ENCODE measurements at regions of chr6 and their contacts with region 1.

Region 1: DNA sequence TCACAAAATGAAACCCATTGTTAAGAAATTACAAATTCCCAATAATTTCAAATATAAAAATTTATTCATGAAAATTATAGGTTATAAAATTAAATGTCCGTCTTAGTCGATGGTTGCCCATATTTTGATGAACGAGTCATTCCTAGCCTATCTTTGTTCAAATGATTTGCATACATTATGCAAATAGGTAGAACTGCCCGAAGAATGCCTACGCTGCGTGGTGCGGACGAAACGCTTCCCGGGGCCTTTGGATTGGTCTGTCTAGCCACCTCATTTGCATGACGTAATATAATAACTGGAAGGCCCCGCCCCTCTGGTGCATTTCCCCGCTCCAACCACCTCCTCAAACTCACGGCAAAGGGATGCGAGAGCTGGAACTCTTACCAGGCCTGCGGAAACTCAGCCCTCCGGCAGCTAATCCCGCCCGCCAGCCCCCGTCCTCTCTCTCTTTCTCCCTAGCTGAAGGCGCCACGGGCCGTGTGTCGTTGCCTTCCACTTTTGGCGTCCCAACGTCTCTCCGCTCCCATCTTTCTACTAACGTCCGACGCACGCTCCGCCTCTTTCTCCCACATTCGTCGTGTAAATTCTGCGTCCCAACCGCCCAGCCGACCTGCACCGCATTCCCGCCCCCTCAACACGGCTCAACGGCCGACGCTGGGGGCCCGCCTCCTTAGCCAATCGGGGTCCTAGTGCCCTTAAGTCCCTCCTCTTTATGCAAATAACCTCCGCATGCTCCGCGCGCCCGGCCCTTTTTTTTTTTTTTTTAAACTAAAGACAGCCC is 520 bp upstream of the PRRC2A start:
- DNase-seq: peak; percentile 98
- ATAC-seq: peak; percentile 87
- H3K4me3 ChIP-seq: peak overlapping the region; percentile 64
- H3K27ac ChIP-seq: peak overlapping the region; percentile 92
- H3K4me1 ChIP-seq: no peaks in the 10 kb centered on the region
- H3K27me3 ChIP-seq: no peaks in the 10 kb centered on the region
- CTCF ChIP-seq: no peak
- POLR2A ChIP-seq: peak; percentile 84; the same call in 1 of the 2 replicates
- RAD21 ChIP-seq: no peak

Region 2: DNA sequence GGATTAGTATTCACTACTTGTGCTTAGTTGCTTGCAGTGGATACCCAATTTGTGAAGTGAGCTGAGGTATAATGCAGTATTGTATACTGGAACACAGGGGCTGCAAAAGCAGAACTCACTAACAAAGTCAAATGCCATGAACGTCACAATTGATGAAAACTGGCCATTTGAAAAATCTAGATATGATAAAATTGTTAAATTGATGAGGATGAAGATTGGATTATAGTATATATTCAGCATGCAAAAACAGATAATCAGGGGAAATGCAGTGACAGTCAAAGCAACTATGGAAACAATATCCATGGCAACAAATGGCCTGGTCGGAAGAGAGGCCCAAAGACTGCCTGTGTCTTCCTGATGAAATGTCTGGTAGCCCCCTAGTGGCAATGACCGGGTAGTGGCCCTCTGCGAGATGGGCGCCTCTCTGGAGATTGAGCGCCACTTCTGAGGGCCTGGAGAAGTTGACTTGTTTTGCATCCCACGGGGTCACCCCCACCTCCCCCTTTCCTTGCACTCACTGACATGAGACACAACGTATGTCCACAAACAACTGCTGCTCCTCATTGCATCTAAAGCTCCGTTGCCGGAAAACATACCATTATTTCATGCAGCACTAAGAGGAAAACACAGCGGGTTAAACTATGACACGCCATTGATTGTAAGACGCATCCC is 551.2 kb before region 1 on chr6:
- CTCF ChIA-PET with region 1: no interaction called
- POLR2A ChIA-PET with region 1: no interaction called
- dilution Hi-C with region 1: no loop called
- in situ Hi-C with region 1: no loop called
- intact Hi-C with region 1: no loop called
- DNase-seq: peak; percentile 83
- ATAC-seq: peak; percentile 74
- H3K4me3 ChIP-seq: no peak overlapping the region
- H3K27ac ChIP-seq: no peak overlapping the region
- H3K4me1 ChIP-seq: peaks cover 3% of the 10 kb centered on the region
- H3K27me3 ChIP-seq: no peaks in the 10 kb centered on the region
- CTCF ChIP-seq: peak; percentile 86
- POLR2A ChIP-seq: no peak
- RAD21 ChIP-seq: peak; percentile 77

Region 3: GRCh38 chr6:31559958-31560696 is 59.9 kb before region 1 on chr6:
- CTCF ChIA-PET with region 1: no interaction called
- POLR2A ChIA-PET with region 1: no interaction called
- dilution Hi-C with region 1: no loop called
- in situ Hi-C with region 1: no loop called
- intact Hi-C with region 1: loop called (anchors 2 kb)
- DNase-seq: peak; percentile 52
- ATAC-seq: peak; percentile 89
- H3K4me3 ChIP-seq: no peak overlapping the region
- H3K27ac ChIP-seq: peak overlapping the region; percentile 22
- H3K4me1 ChIP-seq: peaks cover 18% of the 10 kb centered on the region
- H3K27me3 ChIP-seq: no peaks in the 10 kb centered on the region
- CTCF ChIP-seq: no peak
- POLR2A ChIP-seq: no peak
- RAD21 ChIP-seq: no peak

Region 4: DNA sequence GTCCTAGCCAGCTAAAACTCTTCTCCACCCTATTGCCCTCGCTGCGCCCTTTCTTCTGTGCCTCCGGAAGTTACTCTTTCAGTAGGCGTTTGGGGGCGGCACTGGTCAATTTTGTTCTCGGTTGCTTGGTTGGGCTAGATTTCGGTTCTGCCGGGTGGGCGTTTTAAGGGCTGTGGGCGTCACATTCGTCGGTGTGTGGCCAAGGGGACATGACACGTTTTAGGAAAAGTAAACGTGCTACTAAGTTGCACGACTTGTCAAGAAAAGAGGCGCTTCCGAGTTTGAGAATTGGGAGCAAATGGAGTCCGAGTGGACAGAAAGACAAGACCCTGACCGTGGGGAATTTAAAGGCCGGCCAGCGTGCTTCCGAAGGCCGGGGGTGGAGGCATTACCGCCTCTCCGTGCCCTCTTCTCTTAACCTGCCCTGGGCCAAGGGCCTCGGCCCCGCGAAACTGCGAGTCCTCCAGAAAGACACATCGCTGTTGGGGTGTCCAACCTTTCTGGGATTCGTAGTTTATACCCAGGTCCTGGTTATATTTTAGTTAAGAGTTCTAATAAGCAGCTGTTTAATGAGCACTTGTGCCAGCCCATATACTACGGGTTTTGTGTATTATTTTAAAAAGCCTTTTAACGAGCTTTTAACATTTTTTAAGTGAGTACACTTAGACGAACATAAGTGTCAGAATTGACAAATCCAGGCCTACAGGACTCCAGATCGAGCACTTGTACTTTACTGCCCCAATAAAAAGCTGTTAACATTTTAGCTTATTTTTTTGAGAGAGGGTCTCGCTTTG is 33.1 kb after region 1 on chr6:
- CTCF ChIA-PET with region 1: no interaction called
- POLR2A ChIA-PET with region 1: no interaction called
- dilution Hi-C with region 1: no loop called
- in situ Hi-C with region 1: no loop called
- intact Hi-C with region 1: loop called (anchors 1 kb)
- DNase-seq: no peak
- ATAC-seq: peak; percentile 75
- H3K4me3 ChIP-seq: peak overlapping the region; percentile 59
- H3K27ac ChIP-seq: peak overlapping the region; percentile 88
- H3K4me1 ChIP-seq: 0 out of 2 replicates have a peak, but pooled peaks cover 3% of the 10 kb centered on the region
- H3K27me3 ChIP-seq: no peaks in the 10 kb centered on the region
- CTCF ChIP-seq: no peak
- POLR2A ChIP-seq: no peak; the same call in 1 of the 2 replicates
- RAD21 ChIP-seq: no peak

Region 5: DNA sequence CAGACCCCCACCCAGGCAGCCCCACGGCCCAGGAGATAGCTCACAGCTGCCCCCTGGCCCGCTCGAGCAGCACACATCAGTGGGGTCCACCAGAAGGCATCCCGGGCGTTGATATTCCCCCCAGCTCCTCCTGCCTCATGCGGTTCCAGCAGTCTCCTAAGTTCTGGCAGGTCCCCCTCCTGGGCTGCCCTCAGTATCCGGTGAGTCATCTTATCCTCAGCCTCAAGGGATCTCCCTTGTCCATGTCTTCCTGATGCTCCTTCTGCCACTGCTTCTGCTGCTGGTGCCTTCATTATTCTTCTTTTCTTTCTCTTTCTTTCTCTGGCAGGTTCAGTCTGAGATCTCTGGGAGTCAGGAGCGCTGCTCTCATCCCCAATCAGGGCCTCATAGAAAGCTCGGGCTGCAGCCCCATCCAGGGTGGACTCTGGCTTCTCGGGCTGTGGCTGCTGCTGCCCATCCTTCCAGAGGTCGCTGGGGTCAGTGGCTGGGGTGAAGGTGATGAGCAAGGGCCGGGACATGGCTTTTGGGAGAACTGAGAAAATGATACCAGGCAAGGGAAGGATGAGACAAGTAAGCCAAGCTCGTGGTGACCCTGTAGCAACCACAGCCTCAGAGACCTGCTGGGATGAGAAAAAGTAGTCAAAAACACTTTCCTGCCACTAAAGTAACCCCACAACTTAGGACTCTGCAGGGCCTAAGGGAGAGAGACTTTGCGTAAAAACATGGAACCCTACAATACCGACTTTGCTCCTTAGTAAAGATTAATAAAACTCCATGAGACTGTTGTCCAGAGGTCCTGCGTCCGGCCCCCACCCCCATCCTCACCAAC is 44.2 kb after region 1 on chr6:
- CTCF ChIA-PET with region 1: no interaction called
- POLR2A ChIA-PET with region 1: no interaction called
- dilution Hi-C with region 1: no loop called
- in situ Hi-C with region 1: no loop called
- intact Hi-C with region 1: no loop called
- DNase-seq: peak; percentile 89
- ATAC-seq: peak; percentile 22
- H3K4me3 ChIP-seq: peak overlapping the region; percentile 74
- H3K27ac ChIP-seq: peak overlapping the region; percentile 80
- H3K4me1 ChIP-seq: peaks cover 14% of the 10 kb centered on the region
- H3K27me3 ChIP-seq: no peaks in the 10 kb centered on the region
- CTCF ChIP-seq: no peak
- POLR2A ChIP-seq: 0 out of 2 replicates have a peak, but pooled peaks have one; percentile 32
- RAD21 ChIP-seq: no peak; the same call in 1 of the 2 replicates

Measured in IMR-90 (cell line).